B cell (primary cell): ENCODE measurements at regions of chr20 and their contacts with region 1.

Region 1: DNA sequence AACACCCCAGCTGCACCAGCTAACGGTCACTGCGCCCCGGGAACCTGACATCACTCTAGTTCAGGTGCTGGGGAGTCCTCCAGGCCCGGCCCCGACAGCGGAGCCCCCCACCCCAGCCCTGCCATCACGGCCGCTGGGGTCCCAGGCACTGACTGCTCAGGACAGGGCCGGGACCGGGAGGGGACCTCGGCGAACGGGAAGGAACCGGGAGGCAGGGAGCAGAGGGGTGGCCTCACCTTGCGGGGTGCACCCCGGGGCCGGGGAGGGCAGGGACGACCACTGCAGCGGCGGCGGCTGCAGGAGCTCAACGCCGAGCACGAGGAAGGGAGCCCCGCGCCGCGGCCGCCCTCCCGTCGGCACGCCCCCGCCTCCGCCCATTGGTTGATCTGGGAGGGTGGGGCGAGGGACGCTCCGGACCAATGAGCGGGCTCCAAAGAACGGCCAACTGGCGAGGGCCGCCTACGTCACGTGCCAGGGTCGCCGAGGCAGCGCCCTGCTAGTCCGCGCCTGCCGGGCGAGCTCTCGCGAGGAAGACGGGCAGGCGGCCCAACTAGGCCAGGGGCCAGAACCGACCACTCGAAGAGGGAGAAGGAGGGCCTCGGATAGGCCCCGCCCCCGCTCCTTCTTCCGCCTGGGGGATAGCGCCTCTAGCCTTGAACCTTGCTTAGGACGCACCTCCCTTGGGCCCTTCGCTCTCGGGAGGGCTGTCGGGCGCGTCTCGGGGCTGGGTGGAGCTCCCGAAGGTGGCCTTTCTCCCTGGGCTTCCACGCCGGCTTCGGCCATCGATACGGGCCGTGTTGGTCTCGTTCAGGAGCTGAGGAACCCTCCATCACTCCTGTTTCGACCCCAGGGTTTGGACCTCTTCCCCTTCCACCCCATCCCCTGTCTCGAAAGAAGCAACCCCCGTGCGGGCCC is at the start of gene ADISSP:
- DNase-seq: peak; percentile 97
- ATAC-seq: peak; percentile 87
- H3K4me3 ChIP-seq: peak within 1 kb of the TSS; percentile 48 to 97 (median 77)
- H3K4me3 Mint-ChIP-seq: peak within 1 kb of the TSS; percentile 96
- H3K27ac ChIP-seq: peak within 1 kb of the TSS; percentile 98 to 99
- H3K27ac Mint-ChIP-seq: peak within 1 kb of the TSS; percentile 97
- H3K4me1 ChIP-seq: peaks cover 12 to 31% of the 10 kb centered on the region in 2 donors
- H3K4me1 Mint-ChIP-seq: peaks cover 27% of the 10 kb centered on the region
- H3K27me3 ChIP-seq: no peaks in the 10 kb centered on the region
- H3K27me3 Mint-ChIP-seq: no peaks in the 10 kb centered on the region
- CTCF ChIP-seq: no peak
- total RNA-seq, gene ADISSP: 18.4 and 19.1 TPM in 2 replicates

Region 2: DNA sequence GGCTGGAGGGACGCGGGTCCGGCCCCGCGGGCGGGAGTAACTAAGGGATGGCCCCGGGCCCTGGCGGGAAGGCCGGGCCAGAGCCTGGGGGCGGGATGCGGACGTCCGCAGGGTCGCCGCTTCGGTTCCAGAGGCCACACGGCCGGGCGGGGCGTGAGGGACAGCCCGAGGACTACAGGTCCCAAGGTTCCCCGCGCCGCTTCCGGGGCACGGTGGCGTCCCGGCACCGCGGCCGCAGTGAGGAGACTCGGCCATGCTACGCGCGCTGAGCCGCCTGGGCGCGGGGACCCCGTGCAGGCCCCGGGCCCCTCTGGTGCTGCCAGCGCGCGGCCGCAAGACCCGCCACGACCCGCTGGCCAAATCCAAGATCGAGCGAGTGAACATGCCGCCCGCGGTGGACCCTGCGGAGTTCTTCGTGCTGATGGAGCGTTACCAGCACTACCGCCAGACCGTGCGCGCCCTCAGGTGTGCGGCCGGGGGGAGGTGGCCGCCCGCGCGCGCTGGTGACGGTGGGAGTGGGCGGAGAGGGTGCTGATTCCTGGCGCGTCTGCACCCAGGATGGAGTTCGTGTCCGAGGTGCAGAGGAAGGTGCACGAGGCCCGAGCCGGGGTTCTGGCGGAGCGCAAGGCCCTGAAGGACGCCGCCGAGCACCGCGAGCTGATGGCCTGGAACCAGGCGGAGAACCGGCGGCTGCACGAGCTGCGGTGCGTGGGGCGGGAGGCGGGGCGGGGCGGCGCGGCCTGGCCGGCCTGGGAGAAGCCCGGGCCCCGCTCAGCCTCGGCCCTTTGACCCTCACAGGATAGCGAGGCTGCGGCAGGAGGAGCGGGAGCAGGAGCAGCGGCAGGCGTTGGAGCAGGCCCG is 721.6 kb before region 1 on chr20 and contains the start of gene MRPS26:
- CTCF ChIA-PET with region 1: no interaction called
- POLR2A ChIA-PET with region 1: no interaction called
- intact Hi-C with region 1: loop called (anchors 5 kb)
- DNase-seq: peak; percentile 89
- ATAC-seq: peak; percentile 90
- H3K4me3 ChIP-seq: peak within 1 kb of the TSS; percentile 3 to 89 (median 82)
- H3K4me3 Mint-ChIP-seq: peak within 1 kb of the TSS; percentile 95
- H3K27ac ChIP-seq: peak within 1 kb of the TSS; percentile 63 to 88
- H3K27ac Mint-ChIP-seq: peak within 1 kb of the TSS; percentile 97
- H3K4me1 ChIP-seq: peaks cover 11 to 17% of the 10 kb centered on the region in 2 donors
- H3K4me1 Mint-ChIP-seq: peaks cover 15% of the 10 kb centered on the region
- H3K27me3 ChIP-seq: no peaks in the 10 kb centered on the region
- H3K27me3 Mint-ChIP-seq: no peaks in the 10 kb centered on the region
- CTCF ChIP-seq: no peak
- total RNA-seq, gene MRPS26: 33.3 and 35.9 TPM in 2 replicates

Region 3: GRCh38 chr20:3753098-3753980 is 14.3 kb before region 1 on chr20:
- CTCF ChIA-PET with region 1: interaction called, 47 read pairs
- POLR2A ChIA-PET with region 1: no interaction called
- intact Hi-C with region 1: loop called (anchors 1 kb)
- DNase-seq: peak; percentile 72
- ATAC-seq: peak; percentile 59
- H3K4me3 ChIP-seq: no peak overlapping the region
- H3K4me3 Mint-ChIP-seq: peak overlapping the region; percentile 37
- H3K27ac ChIP-seq: no peak overlapping the region
- H3K27ac Mint-ChIP-seq: peak overlapping the region; percentile 67
- H3K4me1 ChIP-seq: peaks cover 0 to 12% of the 10 kb centered on the region in 2 donors
- H3K4me1 Mint-ChIP-seq: peaks cover 7% of the 10 kb centered on the region
- H3K27me3 ChIP-seq: no peaks in the 10 kb centered on the region
- H3K27me3 Mint-ChIP-seq: no peaks in the 10 kb centered on the region
- CTCF ChIP-seq: peak; percentile 75

Region 4: DNA sequence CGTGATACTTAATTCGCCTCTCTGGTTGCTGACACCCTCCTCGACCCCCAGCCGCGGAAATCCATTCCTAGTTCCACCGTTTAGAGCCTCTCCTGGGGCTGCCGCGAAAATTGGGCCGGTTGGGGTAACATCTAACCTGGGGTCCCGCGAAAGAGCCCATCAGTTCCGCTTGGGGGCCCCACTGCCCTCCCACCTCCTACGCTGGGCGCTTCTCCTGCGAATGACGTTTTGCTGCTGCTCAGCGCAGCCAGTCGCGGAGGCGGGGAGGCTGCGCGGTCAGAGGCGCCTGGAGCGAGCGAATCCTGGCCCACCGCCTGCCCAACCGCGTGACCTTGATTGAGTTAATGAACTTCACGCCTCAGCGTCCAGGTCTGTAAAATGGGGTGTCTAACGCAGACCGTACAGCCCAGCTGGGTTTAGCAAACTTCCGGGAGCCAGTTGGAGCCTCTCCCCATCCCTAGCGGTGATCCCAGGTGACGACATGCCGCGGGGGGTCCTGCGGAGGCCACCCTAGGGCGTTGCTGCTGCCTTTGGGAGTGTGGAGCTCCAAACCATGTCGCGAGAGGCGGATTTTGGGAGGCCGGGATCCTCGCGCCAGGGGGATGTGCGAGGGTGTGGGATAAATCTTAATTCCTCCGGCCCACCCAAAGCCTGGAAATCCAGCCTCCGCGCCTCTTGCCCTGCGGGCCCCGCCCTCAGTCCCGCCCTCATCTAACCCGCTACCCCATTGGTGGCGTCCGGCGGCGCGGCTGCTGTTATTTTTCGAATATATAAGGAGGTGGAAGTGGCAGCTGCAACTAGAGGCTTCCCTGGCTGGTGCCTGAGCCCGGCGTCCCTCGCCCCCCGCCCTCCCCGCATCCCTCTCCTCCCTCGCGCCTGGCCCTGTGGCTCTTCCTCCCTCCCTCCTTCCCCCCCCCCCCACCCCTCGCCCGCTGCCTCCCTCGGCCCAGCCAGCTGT is 28.1 kb after region 1 on chr20 and contains the start of gene CDC25B:
- CTCF ChIA-PET with region 1: no interaction called
- POLR2A ChIA-PET with region 1: interaction called, 8 read pairs
- intact Hi-C with region 1: loop called (anchors 1 kb)
- DNase-seq: peak; percentile 89
- ATAC-seq: peak; percentile 76
- H3K4me3 ChIP-seq: peak within 1 kb of the TSS; percentile 64 to 100 (median 90)
- H3K4me3 Mint-ChIP-seq: peak within 1 kb of the TSS; percentile 97
- H3K27ac ChIP-seq: peak within 1 kb of the TSS; percentile 93 to 97
- H3K27ac Mint-ChIP-seq: peak within 1 kb of the TSS; percentile 98
- H3K4me1 ChIP-seq: peaks cover 47 to 52% of the 10 kb centered on the region in 2 donors
- H3K4me1 Mint-ChIP-seq: peaks cover 49% of the 10 kb centered on the region
- H3K27me3 ChIP-seq: no peaks in the 10 kb centered on the region
- H3K27me3 Mint-ChIP-seq: no peaks in the 10 kb centered on the region
- CTCF ChIP-seq: peak; percentile 39
- total RNA-seq, gene CDC25B: 72.3 and 77.3 TPM in 2 replicates

Region 5: DNA sequence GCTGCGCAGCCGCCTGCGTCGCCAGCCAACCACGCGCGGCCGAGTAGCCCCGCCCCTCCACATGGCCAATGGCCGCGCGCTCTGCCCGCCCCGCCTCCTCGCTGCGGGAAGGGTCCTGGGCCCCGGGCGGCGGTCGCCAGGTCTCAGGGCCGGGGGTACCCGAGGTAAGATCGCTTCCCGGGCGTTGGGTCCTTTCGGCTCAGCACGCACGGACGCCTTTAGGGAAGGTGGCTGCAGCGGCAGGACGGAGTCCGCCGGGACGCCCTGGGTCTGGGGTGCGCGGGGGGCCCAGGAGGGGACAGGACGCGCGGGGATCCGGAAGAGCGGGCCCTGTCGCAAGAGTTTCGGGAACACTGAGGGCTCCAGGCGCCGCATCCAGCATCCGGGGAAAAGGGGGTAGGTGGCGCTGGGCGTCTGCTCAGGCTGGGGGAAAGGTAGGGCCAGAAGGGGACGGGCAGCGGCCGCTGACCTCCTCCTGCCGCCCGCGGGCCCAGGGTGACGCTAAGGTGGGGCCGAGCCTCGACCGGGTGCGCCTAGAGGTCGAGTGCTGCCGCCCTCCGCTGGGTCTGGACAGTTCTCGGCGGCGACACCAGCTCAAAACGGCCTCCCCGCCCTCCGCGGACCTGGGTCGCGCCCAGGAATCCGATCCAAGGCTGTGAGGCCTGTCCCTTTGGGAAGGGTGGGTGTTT is 79.2 kb after region 1 on chr20 and contains the start of gene MAVS:
- CTCF ChIA-PET with region 1: interaction called, 3 read pairs
- POLR2A ChIA-PET with region 1: interaction called, 5 read pairs
- intact Hi-C with region 1: loop called (anchors 1 kb)
- DNase-seq: peak; percentile 88
- ATAC-seq: peak; percentile 98
- H3K4me3 ChIP-seq: peak within 1 kb of the TSS; percentile 59 to 93 (median 86)
- H3K4me3 Mint-ChIP-seq: peak within 1 kb of the TSS; percentile 90
- H3K27ac ChIP-seq: peak within 1 kb of the TSS; percentile 63 to 86
- H3K27ac Mint-ChIP-seq: peak within 1 kb of the TSS; percentile 87
- H3K4me1 ChIP-seq: peaks cover 8 to 18% of the 10 kb centered on the region in 2 donors
- H3K4me1 Mint-ChIP-seq: peaks cover 32% of the 10 kb centered on the region
- H3K27me3 ChIP-seq: no peaks in the 10 kb centered on the region
- H3K27me3 Mint-ChIP-seq: no peaks in the 10 kb centered on the region
- CTCF ChIP-seq: no peak
- total RNA-seq, gene MAVS: 52.2 and 53.3 TPM in 2 replicates

Region 6: DNA sequence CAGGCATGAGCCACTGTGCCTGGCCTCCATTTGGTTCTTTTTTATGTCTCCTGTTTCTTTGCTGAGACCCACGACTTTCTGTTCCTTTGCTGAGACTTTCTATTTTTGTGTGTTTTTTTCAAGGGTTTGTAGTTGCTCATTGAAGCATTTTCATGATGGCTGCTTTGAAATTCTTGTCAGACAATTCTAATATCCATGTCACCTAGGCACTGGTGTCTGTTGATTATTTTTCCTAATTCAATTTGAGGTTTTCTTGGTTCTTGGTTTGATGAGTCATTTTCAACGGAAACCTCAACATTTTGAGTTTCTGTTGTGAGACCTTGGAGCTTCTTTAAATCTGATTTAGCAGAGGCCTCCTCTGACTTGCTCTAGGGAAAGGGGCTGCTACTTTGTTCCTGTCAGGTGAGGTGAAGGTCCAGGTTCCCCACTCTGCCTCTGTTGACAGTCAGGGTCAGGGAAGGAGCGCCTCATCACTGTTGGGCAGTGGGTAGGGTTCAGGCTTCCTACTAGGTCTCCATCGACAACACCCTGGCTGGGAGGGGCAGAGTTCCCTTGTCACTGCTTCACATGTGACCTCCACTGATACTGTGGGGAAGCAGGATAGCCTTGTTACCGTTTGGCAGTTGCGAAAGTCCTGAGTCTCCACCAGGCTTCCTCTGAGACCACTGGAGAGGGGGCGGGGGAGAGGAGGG is 314.9 kb after region 1 on chr20:
- CTCF ChIA-PET with region 1: interaction called, 6 read pairs
- POLR2A ChIA-PET with region 1: no interaction called
- intact Hi-C with region 1: loop called (anchors 5 kb)
- DNase-seq: peak; percentile 39
- ATAC-seq: peak; percentile 50
- H3K4me3 ChIP-seq: peak overlapping the region in 1 of 5 experiments; percentile 15
- H3K4me3 Mint-ChIP-seq: peak overlapping the region; percentile 70
- H3K27ac ChIP-seq: peak overlapping the region; percentile 3 to 11
- H3K27ac Mint-ChIP-seq: peak overlapping the region; percentile 74
- H3K4me1 ChIP-seq: peaks cover 17 to 23% of the 10 kb centered on the region in 2 donors
- H3K4me1 Mint-ChIP-seq: peaks cover 31% of the 10 kb centered on the region
- H3K27me3 ChIP-seq: no peaks in the 10 kb centered on the region
- H3K27me3 Mint-ChIP-seq: peaks cover 23% of the 10 kb centered on the region
- CTCF ChIP-seq: no peak